ENCODE measurements at regions of chr9 and their contacts with region 1.

Region 1: DNA sequence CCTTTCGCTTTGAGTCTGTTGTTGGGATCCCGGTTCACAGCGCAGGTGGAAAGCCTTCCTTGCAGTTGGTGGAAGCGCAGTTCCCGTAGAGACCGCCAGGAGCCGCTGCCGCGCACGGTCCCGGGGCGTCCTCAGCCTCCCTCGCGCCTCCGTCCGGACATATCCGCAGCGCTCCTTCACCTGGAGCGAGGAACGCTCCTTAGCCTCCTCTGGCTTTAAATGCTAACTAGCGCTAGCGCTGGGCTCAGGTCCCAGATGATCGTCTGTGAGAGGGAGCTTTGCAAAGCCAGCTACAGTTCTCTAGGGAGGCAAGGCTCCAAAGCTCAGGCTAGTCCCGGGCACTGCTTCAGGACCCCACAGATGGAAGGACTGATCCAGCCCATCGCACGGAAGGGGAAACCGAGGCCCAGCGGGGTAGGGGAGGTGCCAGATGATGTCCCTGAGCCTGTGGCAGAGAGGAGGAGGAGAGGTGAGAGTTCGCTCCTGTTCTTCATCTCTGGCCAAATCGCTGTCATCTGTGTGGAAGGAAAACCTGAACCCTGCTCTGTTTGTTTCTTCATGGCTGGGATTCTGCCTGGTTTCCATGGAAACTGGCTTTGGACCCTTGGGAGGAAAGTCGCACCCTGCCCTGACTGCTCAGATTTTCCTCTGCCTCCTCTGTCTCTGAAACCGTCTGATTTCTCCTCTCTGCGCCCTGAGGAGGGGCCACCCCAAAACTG is 31.4 kb downstream of the COL15A1 start:
- DNase-seq: no peak
- H3K4me3 ChIP-seq: peak overlapping the region; percentile 38
- CTCF ChIP-seq: peak; percentile 100

Region 2: GRCh38 chr9:98860871-98861293 is 114.3 kb before region 1 on chr9:
- CTCF ChIA-PET with region 1: interaction called, 32 read pairs
- POLR2A ChIA-PET with region 1: no interaction called
- DNase-seq: peak; percentile 73
- H3K4me3 ChIP-seq: no peak overlapping the region
- CTCF ChIP-seq: peak; percentile 66

Region 3: GRCh38 chr9:98906262-98907040 is 68.7 kb before region 1 on chr9:
- CTCF ChIA-PET with region 1: interaction called, 11 read pairs
- POLR2A ChIA-PET with region 1: no interaction called
- DNase-seq: no peak
- H3K4me3 ChIP-seq: no peak overlapping the region
- CTCF ChIP-seq: no peak

Region 4: GRCh38 chr9:98958271-98958984 is 16.7 kb before region 1 on chr9:
- CTCF ChIA-PET with region 1: interaction called, 56 read pairs
- POLR2A ChIA-PET with region 1: no interaction called
- DNase-seq: peak; percentile 21
- H3K4me3 ChIP-seq: no peak overlapping the region
- CTCF ChIP-seq: no peak

Region 5: DNA sequence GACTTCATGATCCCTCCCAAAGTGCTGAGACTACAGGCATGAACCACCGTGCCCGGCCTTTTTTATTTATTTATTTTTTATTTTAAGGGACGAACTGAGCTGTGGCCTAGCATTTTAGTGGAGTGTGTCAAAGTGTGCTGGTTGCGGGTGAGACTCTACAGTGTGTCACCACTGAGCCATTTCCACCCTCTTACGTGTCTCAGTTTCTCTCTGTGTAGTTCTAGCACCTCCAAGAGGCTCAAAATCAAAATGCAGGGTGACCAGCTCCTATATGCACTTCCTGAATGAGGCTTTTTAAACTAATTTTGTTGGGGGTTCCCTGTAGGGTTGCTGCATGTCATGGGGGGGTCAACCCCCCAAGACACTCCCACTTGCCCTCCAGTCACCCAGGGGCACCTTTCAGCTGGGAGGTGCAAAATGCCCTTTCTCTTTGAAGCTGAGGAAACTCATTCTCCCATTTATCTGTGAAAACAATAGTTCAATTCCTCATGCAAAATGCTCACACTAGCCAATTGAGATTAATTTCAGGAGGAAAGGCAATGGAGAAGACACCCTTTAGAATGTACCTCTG is 37.9 kb after region 1 on chr9:
- CTCF ChIA-PET with region 1: interaction called, 17 read pairs
- POLR2A ChIA-PET with region 1: no interaction called
- DNase-seq: no peak
- H3K4me3 ChIP-seq: no peak overlapping the region
- CTCF ChIP-seq: no peak

Measured in AG04449 (cell line).